ENCODE measurements at regions of chr21 and their contacts with region 1.

Region 1: GRCh38 chr21:35138665-35139381 is 89.7 kb upstream of the RUNX1 start:
- DNase-seq: peak; percentile 94
- ATAC-seq: peak; percentile 95
- H3K4me3 Mint-ChIP-seq: peak overlapping the region; percentile 63
- H3K27ac Mint-ChIP-seq: peak overlapping the region; percentile 97
- H3K4me1 Mint-ChIP-seq: peaks cover 35% of the 10 kb centered on the region
- H3K27me3 Mint-ChIP-seq: no peaks in the 10 kb centered on the region
- CTCF ChIP-seq: no peak

Region 2: DNA sequence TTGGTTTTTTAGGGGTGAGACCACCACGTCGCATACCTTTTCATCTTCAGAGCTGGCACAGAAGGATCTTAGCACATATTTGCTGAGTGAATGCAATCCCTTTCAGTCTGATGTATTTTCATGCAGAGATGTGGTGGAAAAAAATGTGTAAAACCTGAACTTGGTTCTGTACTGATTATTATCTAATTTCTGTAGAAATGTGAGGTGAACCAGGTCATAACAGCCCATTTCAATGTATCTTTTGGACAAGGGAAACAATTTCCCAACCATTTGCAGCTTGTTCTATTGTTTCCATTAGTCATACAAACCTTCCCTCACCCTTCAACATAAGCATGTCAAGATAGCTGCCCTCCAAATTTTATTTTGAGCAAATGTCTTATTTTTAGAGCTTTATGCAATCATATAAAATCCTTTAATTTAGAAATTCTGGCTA is 42.9 kb before region 1 on chr21:
- CTCF ChIA-PET with region 1: no interaction called
- POLR2A ChIA-PET with region 1: no interaction called
- intact Hi-C with region 1: loop called (anchors 2 kb)
- DNase-seq: peak; percentile 17
- ATAC-seq: peak; percentile 41
- H3K4me3 Mint-ChIP-seq: no peak overlapping the region
- H3K27ac Mint-ChIP-seq: peak overlapping the region; percentile 74
- H3K4me1 Mint-ChIP-seq: peaks cover 25% of the 10 kb centered on the region
- H3K27me3 Mint-ChIP-seq: peaks cover 2% of the 10 kb centered on the region
- CTCF ChIP-seq: no peak